Activated CD4-positive, alpha-beta memory T cell treated with anti-CD3 and anti-CD28 coated beads, Interleukin-2, amount 10 ng/mL, durations not matched to agents 7 days and 5 days (primary cell): ENCODE measurements at regions of chr4 and their contacts with region 1.

Region 1: DNA sequence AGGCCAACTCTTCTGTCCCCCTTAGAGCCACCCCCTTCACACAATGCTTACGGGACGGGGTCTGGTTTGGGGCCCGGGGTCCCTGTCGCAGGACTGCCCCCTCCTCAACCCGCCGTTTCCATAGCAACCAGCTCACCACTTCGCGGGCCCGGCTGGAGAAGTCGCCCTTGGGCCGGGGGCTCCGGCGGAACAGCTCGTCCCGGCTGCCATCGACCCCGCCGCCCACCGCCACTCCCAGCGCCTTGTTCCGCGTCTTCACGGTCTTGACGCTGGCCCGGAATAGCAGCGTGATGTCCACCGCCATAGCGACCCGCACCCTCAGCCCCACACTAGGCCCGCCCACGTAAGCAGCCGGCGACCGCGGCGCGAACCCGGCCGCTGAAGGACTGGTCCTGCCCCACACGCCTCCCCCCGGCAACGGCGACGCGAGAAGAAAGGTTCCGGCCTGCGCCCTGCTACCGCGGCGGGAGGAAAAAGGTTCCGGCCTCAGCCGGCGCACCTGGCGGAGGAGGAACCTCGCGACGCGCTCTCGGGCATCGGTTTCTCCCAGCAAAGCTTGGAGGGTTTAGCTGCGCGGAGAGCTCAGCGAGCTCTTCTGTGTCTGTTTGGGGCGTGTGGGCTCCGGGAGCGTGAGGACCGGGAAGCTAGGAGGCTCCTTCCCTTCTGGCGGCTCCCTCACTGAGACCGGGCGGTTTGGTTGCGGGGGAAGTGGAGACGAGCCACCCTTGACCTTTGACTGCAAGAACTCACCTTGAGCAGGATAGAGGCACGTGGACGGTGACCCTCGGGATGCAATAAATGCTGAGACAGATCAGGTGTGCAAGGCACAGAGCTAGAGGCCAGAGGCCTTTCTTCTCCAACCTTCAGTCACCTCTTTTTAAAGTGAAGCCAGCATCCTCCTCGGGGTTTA is at the start of gene STX18:
- DNase-seq: peak; percentile 89
- H3K4me3 Mint-ChIP-seq: peak within 1 kb of the TSS; percentile 94
- H3K27ac Mint-ChIP-seq: peak within 1 kb of the TSS; percentile 87
- H3K4me1 Mint-ChIP-seq: peaks cover 45% of the 10 kb centered on the region
- H3K27me3 Mint-ChIP-seq: no peaks in the 10 kb centered on the region
- total RNA-seq, gene STX18: 22.8 to 26.5 TPM

Region 2: GRCh38 chr4:4323705-4324534 is 218.0 kb before region 1 on chr4:
- CTCF ChIA-PET with region 1: no interaction called
- POLR2A ChIA-PET with region 1: no interaction called
- DNase-seq: no peak
- H3K4me3 Mint-ChIP-seq: no peak overlapping the region
- H3K27ac Mint-ChIP-seq: no peak overlapping the region
- H3K4me1 Mint-ChIP-seq: no peaks in the 10 kb centered on the region
- H3K27me3 Mint-ChIP-seq: no peaks in the 10 kb centered on the region

Region 3: DNA sequence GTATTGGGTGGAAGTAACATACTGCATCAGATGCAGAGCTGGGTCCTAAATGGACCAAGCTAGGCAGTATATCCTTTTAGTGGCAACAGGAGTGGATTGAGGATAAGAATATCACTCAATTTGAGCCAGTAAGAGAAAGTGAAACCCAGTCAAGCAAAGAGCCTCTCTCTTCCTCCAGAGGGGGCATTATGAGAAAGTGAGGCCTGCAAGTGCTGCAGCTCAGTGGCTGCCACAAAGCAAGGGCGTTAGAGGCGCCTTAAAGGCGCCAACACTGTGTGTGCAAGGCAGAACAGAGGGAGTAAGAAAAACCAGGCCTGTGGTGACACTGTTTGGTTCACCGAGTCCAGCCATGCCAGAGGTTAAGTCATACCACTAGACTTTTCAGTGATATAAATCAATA is 17.6 kb before region 1 on chr4:
- CTCF ChIA-PET with region 1: interaction called, 3 read pairs
- POLR2A ChIA-PET with region 1: interaction called, 30 read pairs
- DNase-seq: peak; percentile 47
- H3K4me3 Mint-ChIP-seq: no peak overlapping the region
- H3K27ac Mint-ChIP-seq: no peak overlapping the region
- H3K4me1 Mint-ChIP-seq: peaks cover 15% of the 10 kb centered on the region
- H3K27me3 Mint-ChIP-seq: no peaks in the 10 kb centered on the region

Region 4: DNA sequence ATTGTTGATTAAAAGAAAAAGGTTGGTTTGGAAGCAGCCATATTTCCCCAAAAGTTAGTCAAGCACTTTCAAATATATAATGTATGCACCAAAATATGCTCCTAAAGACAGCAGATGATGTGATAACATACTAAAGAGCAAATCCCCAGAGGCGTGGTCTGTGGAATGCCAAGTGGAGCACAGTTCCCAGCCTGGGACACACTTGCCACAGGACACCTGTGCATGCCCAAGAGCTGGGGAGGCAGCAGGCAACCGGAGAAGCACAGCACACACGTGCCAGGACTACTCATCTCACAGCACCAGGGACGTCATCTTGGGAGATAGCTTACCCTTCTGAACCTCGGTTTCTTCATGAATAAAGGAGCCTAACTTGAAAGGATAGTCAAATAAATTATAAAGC is 12.5 kb before region 1 on chr4:
- CTCF ChIA-PET with region 1: interaction called, 3 read pairs
- POLR2A ChIA-PET with region 1: interaction called, 30 read pairs
- DNase-seq: no peak
- H3K4me3 Mint-ChIP-seq: no peak overlapping the region
- H3K27ac Mint-ChIP-seq: no peak overlapping the region
- H3K4me1 Mint-ChIP-seq: peaks cover 6% of the 10 kb centered on the region
- H3K27me3 Mint-ChIP-seq: no peaks in the 10 kb centered on the region